SK-N-SH (cell line): ENCODE measurements at regions of chr19 and their contacts with region 1.

Region 1: DNA sequence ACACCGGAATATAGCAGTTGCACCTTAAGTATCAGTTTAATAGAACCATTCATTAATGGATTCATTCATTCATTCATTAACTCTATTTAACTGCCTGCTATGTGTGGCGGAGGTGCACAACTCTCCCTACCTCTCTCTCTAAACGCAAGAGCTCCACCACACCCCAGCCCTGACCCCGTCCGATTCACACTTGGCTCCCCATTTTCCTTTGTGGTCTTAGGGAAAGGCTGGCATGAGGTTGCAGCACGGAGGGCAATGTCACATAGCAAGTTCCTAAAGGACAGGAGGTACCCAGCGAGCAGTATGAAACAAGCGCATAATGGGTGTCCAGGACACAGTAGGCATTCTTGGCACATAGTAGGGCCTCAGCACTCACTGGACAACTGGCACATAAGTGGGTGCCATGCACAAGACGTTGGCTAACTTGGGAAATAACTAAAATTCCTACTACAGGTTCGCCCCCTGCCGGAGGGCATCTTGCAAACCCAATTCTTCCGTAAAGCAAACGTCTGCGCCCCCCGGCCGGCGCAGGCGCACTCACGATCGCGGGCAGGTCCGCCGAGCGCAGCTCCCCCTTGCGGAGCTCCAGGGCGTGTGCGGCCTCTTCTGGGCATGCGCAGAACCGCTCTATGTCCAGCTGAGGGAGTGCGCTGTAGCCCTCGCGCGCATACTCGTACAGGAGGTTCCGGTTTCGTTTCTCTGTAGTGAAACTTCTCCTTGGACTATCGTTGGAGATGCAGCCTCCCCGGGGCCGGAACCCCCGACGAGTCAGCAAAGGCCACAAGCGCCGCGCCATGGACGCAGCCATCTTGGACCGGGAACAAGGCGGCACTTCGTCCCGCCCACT is at the start of gene SARS2:
- DNase-seq: peak; percentile 98
- H3K4me3 ChIP-seq: peak within 1 kb of the TSS; percentile 80 to 81
- H3K27ac ChIP-seq: peak within 1 kb of the TSS; percentile 87 to 92
- H3K4me1 ChIP-seq: peaks cover 0 to 11% of the 10 kb centered on the region in 2 experiments; a peak in 1 of 4 replicates
- H3K27me3 ChIP-seq: no peaks in the 10 kb centered on the region
- CTCF ChIP-seq: peak; percentile 99
- EP300 ChIP-seq: no peak
- RAD21 ChIP-seq: peak; percentile 77
- polyA plus RNA-seq, gene SARS2: 36.5 and 39.8 TPM in 2 replicates

Region 2: GRCh38 chr19:38736036-38736412 is 194.1 kb before region 1 on chr19:
- CTCF ChIA-PET with region 1: interaction called, 16 read pairs
- POLR2A ChIA-PET with region 1: no interaction called
- DNase-seq: peak; percentile 77
- H3K4me3 ChIP-seq: peak overlapping the region; percentile 35 to 48; a peak in 3 of 4 replicates
- H3K27ac ChIP-seq: no peak overlapping the region; a peak in 1 of 4 replicates
- H3K4me1 ChIP-seq: peaks cover 7 to 12% of the 10 kb centered on the region in 2 experiments; a peak in 3 of 4 replicates
- H3K27me3 ChIP-seq: no peaks in the 10 kb centered on the region
- CTCF ChIP-seq: no peak
- EP300 ChIP-seq: no peak
- RAD21 ChIP-seq: no peak

Region 3: GRCh38 chr19:38869856-38870607 is 60.1 kb before region 1 on chr19:
- CTCF ChIA-PET with region 1: interaction called, 11 read pairs
- POLR2A ChIA-PET with region 1: no interaction called
- DNase-seq: peak; percentile 91
- H3K4me3 ChIP-seq: peak overlapping the region; percentile 31 to 35; a peak in 3 of 4 replicates
- H3K27ac ChIP-seq: no peak overlapping the region
- H3K4me1 ChIP-seq: peaks cover 0 to 15% of the 10 kb centered on the region in 2 experiments; a peak in 1 of 4 replicates
- H3K27me3 ChIP-seq: no peaks in the 10 kb centered on the region
- CTCF ChIP-seq: peak; percentile 71
- EP300 ChIP-seq: no peak
- RAD21 ChIP-seq: peak; percentile 55

Region 4: DNA sequence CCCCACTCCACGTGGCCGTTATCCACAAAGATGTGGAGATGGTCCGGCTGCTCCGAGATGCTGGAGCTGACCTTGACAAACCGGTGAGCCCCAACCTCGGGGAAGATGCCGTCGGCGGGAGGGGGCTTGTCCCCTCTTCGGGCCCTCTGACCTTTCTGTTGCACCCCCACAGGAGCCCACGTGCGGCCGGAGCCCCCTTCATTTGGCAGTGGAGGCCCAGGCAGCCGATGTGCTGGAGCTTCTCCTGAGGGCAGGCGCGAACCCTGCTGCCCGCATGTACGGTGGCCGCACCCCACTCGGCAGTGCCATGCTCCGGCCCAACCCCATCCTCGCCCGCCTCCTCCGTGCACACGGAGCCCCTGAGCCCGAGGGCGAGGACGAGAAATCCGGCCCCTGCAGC is 22.9 kb before region 1 on chr19:
- CTCF ChIA-PET with region 1: interaction called, 10 read pairs
- POLR2A ChIA-PET with region 1: interaction called, 3 read pairs
- DNase-seq: no peak
- H3K4me3 ChIP-seq: no peak overlapping the region
- H3K27ac ChIP-seq: no peak overlapping the region
- H3K4me1 ChIP-seq: no peaks in the 10 kb centered on the region
- H3K27me3 ChIP-seq: no peaks in the 10 kb centered on the region
- CTCF ChIP-seq: no peak
- EP300 ChIP-seq: no peak
- RAD21 ChIP-seq: no peak

Region 5: GRCh38 chr19:38975214-38975860 is 45.2 kb after region 1 on chr19 and contains the start of gene FBXO17:
- CTCF ChIA-PET with region 1: interaction called, 10 read pairs
- POLR2A ChIA-PET with region 1: interaction called, 3 read pairs
- DNase-seq: peak; percentile 90
- H3K4me3 ChIP-seq: peak within 1 kb of the TSS; percentile 64 to 81
- H3K27ac ChIP-seq: peak within 1 kb of the TSS; percentile 77 to 86
- H3K4me1 ChIP-seq: peaks cover 6 to 14% of the 10 kb centered on the region in 2 experiments
- H3K27me3 ChIP-seq: no peaks in the 10 kb centered on the region
- CTCF ChIP-seq: no peak
- EP300 ChIP-seq: no peak
- RAD21 ChIP-seq: no peak
- polyA plus RNA-seq, gene FBXO17: 30.8 and 40.7 TPM in 2 replicates

Region 6: DNA sequence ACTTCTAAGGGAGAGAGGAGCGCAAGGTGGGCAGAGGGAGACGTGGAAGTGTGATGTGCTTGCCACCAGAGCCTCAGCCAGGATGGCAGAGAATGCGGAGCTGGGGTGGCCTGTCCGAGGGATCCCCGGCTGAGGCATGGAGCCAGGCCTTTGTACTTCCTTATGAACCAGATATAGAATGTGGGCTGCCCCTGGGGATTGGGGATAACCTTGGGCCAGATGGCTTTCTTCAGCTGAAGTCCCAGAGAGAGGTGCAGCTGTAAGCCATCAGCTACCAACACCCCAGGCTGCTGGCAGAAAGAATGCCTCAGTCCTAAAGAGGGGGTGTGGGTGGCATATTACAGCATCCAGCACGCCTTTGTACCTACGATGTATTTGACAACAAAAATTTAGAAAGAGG is 70.9 kb after region 1 on chr19:
- CTCF ChIA-PET with region 1: no interaction called
- POLR2A ChIA-PET with region 1: no interaction called
- DNase-seq: no peak
- H3K4me3 ChIP-seq: no peak overlapping the region
- H3K27ac ChIP-seq: no peak overlapping the region
- H3K4me1 ChIP-seq: no peaks in the 10 kb centered on the region; a peak in 1 of 4 replicates
- H3K27me3 ChIP-seq: no peaks in the 10 kb centered on the region
- CTCF ChIP-seq: no peak
- EP300 ChIP-seq: no peak
- RAD21 ChIP-seq: no peak

Region 7: GRCh38 chr19:39064405-39064804 is 134.3 kb after region 1 on chr19:
- CTCF ChIA-PET with region 1: no interaction called
- POLR2A ChIA-PET with region 1: no interaction called
- DNase-seq: no peak
- H3K4me3 ChIP-seq: no peak overlapping the region
- H3K27ac ChIP-seq: no peak overlapping the region
- H3K4me1 ChIP-seq: no peaks in the 10 kb centered on the region
- H3K27me3 ChIP-seq: no peaks in the 10 kb centered on the region
- CTCF ChIP-seq: no peak
- EP300 ChIP-seq: no peak
- RAD21 ChIP-seq: no peak